Activated CD4-positive, alpha-beta T cell treated with anti-CD3 and anti-CD28 coated beads for 36 hours (primary cell): ENCODE measurements at regions of chr5 and their contacts with region 1.

Region 1: GRCh38 chr5:119340597-119341218 is 15.1 kb upstream of the TNFAIP8 start:
- DNase-seq: peak; percentile 71
- ATAC-seq: peak; percentile 14
- H3K4me3 Mint-ChIP-seq: peak overlapping the region; percentile 71
- H3K27ac Mint-ChIP-seq: peak overlapping the region; percentile 96
- H3K4me1 Mint-ChIP-seq: peaks cover 98% of the 10 kb centered on the region
- H3K27me3 Mint-ChIP-seq: no peaks in the 10 kb centered on the region

Region 2: DNA sequence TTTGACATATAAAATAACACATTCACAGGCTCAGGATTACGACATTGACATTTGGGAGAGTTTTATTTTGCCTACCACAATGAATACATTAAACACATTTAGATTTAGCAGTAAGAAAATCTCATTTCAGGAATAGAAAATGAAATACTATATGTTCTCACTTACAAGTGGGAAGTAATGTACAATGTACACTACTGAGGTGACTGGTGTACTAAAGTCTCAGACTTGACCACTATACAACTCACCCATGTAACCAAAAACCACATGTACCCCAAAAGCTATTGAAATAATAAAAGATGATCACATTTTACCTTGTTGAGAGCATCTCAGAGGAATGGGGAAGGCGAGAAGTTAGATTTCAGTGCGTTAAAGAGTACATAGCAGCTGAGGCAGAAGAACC is 1563.7 kb before region 1 on chr5:
- CTCF ChIA-PET with region 1: no interaction called
- POLR2A ChIA-PET with region 1: no interaction called
- intact Hi-C with region 1: no loop called
- DNase-seq: no peak
- ATAC-seq: no peak
- H3K4me3 Mint-ChIP-seq: no peak overlapping the region
- H3K27ac Mint-ChIP-seq: no peak overlapping the region
- H3K4me1 Mint-ChIP-seq: no peaks in the 10 kb centered on the region
- H3K27me3 Mint-ChIP-seq: no peaks in the 10 kb centered on the region

Region 3: GRCh38 chr5:118987988-118988865 is 352.5 kb before region 1 on chr5 and contains the start of gene DTWD2:
- CTCF ChIA-PET with region 1: interaction called, 4 read pairs
- POLR2A ChIA-PET with region 1: no interaction called
- intact Hi-C with region 1: loop called (anchors 5 kb)
- DNase-seq: peak; percentile 96
- ATAC-seq: peak; percentile 90
- H3K4me3 Mint-ChIP-seq: peak within 1 kb of the TSS; percentile 63
- H3K27ac Mint-ChIP-seq: peak within 1 kb of the TSS; percentile 34
- H3K4me1 Mint-ChIP-seq: peaks cover 23% of the 10 kb centered on the region
- H3K27me3 Mint-ChIP-seq: peaks cover 1% of the 10 kb centered on the region
- total RNA-seq, gene DTWD2: 3.6 to 4.5 TPM

Region 4: DNA sequence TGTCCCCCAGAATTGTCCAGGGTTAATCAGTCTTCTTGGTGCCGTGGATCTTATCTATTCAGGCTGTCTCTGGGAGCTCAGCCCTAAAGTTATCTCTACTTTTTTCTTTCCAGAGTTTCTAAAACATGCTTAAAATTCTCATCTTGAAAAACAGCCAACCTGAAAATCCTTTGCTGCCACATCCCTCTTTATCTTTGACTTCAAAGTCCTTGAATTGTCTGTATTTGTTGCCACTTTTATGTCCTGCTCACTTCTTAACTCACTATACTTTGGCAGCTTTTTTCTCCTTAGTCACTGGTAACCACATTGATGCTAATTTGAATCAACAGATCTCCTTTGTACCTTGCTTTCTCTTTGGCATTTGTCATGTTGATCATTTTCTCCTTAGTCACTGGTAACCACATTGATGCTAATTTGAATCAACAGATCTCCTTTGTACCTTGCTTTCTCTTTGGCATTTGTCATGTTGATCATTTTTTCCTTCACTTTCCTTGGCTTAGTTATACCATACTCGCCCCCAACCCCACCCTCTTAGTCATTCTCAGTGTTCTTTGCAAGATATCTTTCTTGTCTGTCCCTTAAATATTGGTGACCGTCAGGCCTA is 261.3 kb before region 1 on chr5:
- CTCF ChIA-PET with region 1: no interaction called
- POLR2A ChIA-PET with region 1: no interaction called
- intact Hi-C with region 1: loop called (anchors 2 to 5 kb)
- DNase-seq: peak; percentile 70
- ATAC-seq: peak; percentile 92
- H3K4me3 Mint-ChIP-seq: peak overlapping the region; percentile 33
- H3K27ac Mint-ChIP-seq: peak overlapping the region; percentile 59
- H3K4me1 Mint-ChIP-seq: peaks cover 50% of the 10 kb centered on the region
- H3K27me3 Mint-ChIP-seq: no peaks in the 10 kb centered on the region

Region 5: DNA sequence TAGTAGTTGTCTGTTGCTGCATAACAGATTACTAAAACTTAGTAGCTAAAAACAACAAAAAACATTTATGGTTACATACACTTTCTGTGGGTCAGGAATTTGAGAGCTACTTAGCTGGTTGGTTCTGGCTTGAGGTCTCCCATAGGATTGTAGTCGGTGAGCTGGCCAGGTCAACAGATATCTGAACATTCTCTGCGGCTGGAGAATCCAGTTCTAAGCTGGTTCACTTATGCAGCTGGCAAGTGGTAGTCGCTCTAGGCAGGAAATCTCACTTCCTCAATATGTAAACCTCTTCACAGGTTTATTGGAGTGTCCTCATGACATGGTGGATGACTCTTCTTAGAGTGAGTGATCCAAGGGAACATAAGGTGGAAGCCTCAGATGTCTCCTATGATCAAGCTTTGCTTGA is 50.5 kb before region 1 on chr5:
- CTCF ChIA-PET with region 1: interaction called, 9 read pairs
- POLR2A ChIA-PET with region 1: interaction called, 3 read pairs
- intact Hi-C with region 1: loop called (anchors 5 kb)
- DNase-seq: no peak
- ATAC-seq: peak; percentile 55
- H3K4me3 Mint-ChIP-seq: peak overlapping the region; percentile 0
- H3K27ac Mint-ChIP-seq: peak overlapping the region; percentile 93
- H3K4me1 Mint-ChIP-seq: peaks cover 84% of the 10 kb centered on the region
- H3K27me3 Mint-ChIP-seq: no peaks in the 10 kb centered on the region

Region 6: DNA sequence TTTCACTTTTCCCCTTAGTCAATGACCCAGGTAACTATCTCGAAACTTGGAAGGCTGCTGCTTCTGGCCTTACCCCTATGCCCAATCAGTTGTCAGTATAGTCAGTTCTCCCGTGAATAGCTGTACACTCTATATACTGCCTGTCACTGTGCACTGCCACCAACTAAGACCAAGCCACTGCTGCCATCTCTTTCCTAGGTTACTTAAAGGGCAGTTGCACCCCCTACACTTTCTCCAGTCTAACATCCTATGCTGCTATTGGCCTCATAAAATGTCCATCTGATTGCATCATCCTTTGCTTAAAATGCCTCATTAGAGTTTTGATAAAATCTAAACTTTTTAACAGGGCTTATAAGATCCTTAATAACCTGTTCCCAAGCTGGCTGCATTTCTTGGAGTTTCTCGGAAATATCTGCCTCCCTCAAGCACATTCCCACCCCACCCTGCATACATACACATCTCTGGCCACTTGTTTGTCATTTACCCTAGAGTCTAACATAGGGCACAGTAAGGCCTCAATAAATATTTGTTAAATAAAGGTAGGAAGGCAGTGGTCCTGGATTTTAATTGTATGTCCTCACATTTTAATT is 17.7 kb before region 1 on chr5:
- CTCF ChIA-PET with region 1: interaction called, 14 read pairs
- POLR2A ChIA-PET with region 1: interaction called, 5 read pairs
- intact Hi-C with region 1: loop called in 1 of 2 experiments (anchors 1 kb)
- DNase-seq: peak; percentile 54
- ATAC-seq: peak; percentile 71
- H3K4me3 Mint-ChIP-seq: peak overlapping the region; percentile 42
- H3K27ac Mint-ChIP-seq: peak overlapping the region; percentile 94
- H3K4me1 Mint-ChIP-seq: peaks cover 96% of the 10 kb centered on the region
- H3K27me3 Mint-ChIP-seq: no peaks in the 10 kb centered on the region

Region 7: DNA sequence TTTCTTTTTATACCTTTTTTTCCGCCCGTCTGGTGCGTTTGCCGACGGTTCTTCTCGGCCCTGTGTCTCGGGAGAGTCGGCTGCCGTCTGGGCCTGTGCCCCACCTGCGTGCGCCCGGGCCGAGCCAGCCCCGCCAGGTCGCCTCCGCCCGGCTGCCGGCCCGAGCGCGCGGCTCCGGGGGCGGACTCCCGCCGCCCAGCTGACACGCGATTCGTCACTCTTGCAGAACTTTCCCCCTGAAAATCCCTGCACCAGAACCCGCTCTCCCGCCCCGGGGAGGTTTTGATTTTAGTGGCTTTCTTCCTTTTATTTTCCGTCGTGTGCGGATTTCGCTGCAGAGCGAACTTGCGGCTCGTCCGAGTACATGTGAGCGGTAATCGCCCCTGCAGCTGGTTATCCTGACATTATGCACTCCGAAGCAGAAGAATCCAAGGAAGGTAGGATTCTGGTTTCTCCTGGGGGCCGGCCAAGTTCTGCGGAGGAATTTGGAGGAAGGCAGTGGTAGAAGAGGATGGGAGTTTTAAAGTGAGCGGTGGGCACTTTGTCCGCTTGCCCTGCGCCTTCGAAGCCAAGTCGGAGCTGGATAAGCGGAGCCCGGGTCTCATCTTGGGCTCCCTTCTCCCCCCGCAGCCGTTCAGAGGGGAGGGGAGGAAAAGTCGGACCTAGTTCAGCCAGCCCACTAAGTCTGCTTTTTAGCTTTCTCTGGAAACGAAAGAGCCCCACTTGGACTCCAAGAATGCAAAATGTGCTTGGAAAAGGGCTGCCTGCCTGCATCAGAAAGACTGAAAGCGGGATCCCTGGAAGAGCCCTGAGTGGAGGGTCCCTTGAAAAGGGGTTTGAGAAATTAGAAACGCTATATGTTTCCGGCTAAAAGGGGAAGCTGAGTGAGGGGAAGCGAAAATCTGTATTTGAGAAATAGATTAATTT is 15.2 kb after region 1 on chr5 and contains the start of gene TNFAIP8:
- CTCF ChIA-PET with region 1: interaction called, 38 read pairs
- POLR2A ChIA-PET with region 1: interaction called, 12 read pairs
- intact Hi-C with region 1: loop called (anchors 1 to 2 kb)
- DNase-seq: peak; percentile 91
- ATAC-seq: peak; percentile 65
- H3K4me3 Mint-ChIP-seq: peak within 1 kb of the TSS; percentile 98
- H3K27ac Mint-ChIP-seq: peak within 1 kb of the TSS; percentile 99
- H3K4me1 Mint-ChIP-seq: peaks cover 62% of the 10 kb centered on the region
- H3K27me3 Mint-ChIP-seq: no peaks in the 10 kb centered on the region
- total RNA-seq, gene TNFAIP8: 166 to 171 TPM

Region 8: DNA sequence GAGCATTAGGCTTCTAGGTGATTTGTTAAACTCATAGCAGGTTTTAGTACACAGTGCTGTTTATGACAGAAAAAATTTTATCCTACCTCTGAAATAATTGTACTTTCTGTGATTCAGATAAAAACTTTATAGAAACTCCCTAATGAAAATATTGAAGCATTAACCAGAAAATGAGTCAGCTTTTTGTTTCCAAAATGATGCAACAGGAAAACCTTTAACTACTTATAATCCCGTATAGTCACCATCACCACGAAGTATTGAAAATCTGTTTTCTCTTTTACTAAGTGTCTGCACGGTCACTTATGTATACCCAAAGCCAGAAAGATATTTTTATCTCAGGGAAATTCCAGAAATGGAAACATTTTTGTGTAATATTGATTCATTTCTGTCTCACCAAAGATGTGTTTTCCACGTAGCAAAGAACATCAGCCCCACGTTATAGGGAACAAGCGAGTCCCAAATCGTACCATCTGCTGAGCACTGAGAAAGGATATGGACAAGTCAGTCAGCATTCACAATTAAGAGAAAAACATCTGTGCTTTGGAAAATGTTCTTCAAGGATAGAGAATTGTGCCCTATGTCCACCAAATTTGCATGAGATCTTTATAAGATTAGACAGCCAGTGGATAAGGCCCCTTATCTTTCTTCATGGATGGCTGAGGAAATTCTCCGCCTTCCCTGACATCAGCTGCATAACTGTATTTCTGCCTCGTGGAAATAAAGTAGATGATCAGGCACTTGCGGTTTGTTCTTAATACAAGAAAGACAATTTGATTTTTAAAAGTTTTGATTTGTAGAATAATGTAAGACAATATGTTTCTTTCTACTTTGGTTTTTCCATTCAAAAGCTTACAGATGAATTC is 57.0 kb after region 1 on chr5:
- CTCF ChIA-PET with region 1: no interaction called
- POLR2A ChIA-PET with region 1: interaction called, 3 read pairs
- intact Hi-C with region 1: loop called (anchors 1 kb)
- DNase-seq: peak; percentile 43
- ATAC-seq: peak; percentile 70
- H3K4me3 Mint-ChIP-seq: peak overlapping the region; percentile 56
- H3K27ac Mint-ChIP-seq: peak overlapping the region; percentile 88
- H3K4me1 Mint-ChIP-seq: peaks cover 88% of the 10 kb centered on the region
- H3K27me3 Mint-ChIP-seq: no peaks in the 10 kb centered on the region